Naive thymus-derived CD4-positive, alpha-beta T cell (primary cell): ENCODE measurements at regions of chr5 and their contacts with region 1.

Region 1: DNA sequence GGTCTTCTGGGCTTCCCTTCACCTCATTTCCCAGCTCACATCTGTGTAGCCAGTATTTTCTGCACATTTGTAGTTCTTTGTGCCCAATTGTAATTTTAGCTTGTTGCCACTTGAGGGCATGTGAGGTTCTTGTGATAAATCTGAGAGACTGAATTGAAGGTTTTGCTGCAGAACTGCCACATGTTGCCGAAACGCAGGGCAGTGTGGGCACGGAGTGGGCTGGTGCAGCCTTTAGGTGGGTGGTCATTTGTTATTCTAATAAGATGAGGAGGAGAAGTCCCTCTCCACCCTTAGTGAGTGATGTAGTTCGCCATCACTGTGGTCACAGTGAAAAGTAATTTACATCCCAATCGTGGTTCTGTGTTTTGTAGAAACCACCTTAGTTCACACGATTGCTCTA is 21.2 kb downstream of the OTULIN start:
- DNase-seq: peak in 8 of 9 donors; percentile 41 to 70 (median 62)
- ATAC-seq: peak; percentile 87
- H3K4me3 ChIP-seq: peak overlapping the region; percentile 26
- H3K4me3 Mint-ChIP-seq: peak overlapping the region; percentile 49 to 85 (median 72)
- H3K27ac ChIP-seq: no peak overlapping the region
- H3K27ac Mint-ChIP-seq: peak overlapping the region; percentile 41 to 97 (median 77)
- H3K4me1 ChIP-seq: peaks cover 4% of the 10 kb centered on the region in 2 donors
- H3K4me1 Mint-ChIP-seq: peaks cover 4 to 20% (median 14%) of the 10 kb centered on the region in 7 donors
- H3K27me3 ChIP-seq: no peaks in the 10 kb centered on the region
- H3K27me3 Mint-ChIP-seq: no peaks in the 10 kb centered on the region

Region 2: DNA sequence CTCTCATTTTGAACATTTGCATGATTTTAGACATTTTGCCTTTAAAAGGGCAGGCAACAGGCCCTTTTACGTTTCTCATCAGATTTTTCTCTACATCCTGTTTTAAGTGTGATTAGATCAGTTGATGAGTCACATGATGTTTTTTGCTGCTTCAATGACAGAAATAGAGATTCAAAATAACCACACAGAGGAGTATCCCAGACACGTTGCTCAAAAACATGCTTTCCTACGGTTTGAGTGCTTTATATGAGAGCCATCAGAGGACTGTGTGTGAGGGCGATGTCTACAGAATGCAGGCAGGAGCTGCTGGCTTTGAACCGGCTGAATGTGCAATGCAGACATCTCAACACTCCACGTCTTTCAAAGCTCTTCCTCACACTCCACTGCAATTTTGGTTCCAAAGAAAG is 20.9 kb after region 1 on chr5:
- CTCF ChIA-PET with region 1: interaction called, 45 read pairs
- POLR2A ChIA-PET with region 1: interaction called, 17 read pairs
- intact Hi-C with region 1: loop called (anchors 1 kb)
- DNase-seq: peak in 8 of 9 donors; percentile 33 to 88 (median 84)
- ATAC-seq: peak; percentile 96
- H3K4me3 ChIP-seq: peak overlapping the region; percentile 4
- H3K4me3 Mint-ChIP-seq: peak overlapping the region; percentile 74 to 94 (median 86)
- H3K27ac ChIP-seq: peak overlapping the region; percentile 72
- H3K27ac Mint-ChIP-seq: peak overlapping the region; percentile 96 to 100 (median 99)
- H3K4me1 ChIP-seq: peaks cover 34 to 75% of the 10 kb centered on the region in 2 donors
- H3K4me1 Mint-ChIP-seq: peaks cover 50 to 96% (median 86%) of the 10 kb centered on the region in 7 donors
- H3K27me3 ChIP-seq: no peaks in the 10 kb centered on the region
- H3K27me3 Mint-ChIP-seq: no peaks in the 10 kb centered on the region

Region 3: GRCh38 chr5:14727428-14727865 is 41.7 kb after region 1 on chr5:
- CTCF ChIA-PET with region 1: interaction called, 49 read pairs
- POLR2A ChIA-PET with region 1: interaction called, 6 read pairs
- intact Hi-C with region 1: loop called (anchors 1 kb)
- DNase-seq: peak; percentile 47 to 79 (median 69)
- ATAC-seq: peak; percentile 77
- H3K4me3 ChIP-seq: no peak overlapping the region
- H3K4me3 Mint-ChIP-seq: no peak overlapping the region
- H3K27ac ChIP-seq: no peak overlapping the region
- H3K27ac Mint-ChIP-seq: peak overlapping the region in 5 of 9 donors; percentile 5 to 49 (median 42)
- H3K4me1 ChIP-seq: peaks cover 0 to 4% of the 10 kb centered on the region in 2 donors
- H3K4me1 Mint-ChIP-seq: peaks cover 8 to 22% (median 16%) of the 10 kb centered on the region in 7 donors
- H3K27me3 ChIP-seq: no peaks in the 10 kb centered on the region
- H3K27me3 Mint-ChIP-seq: no peaks in the 10 kb centered on the region

Region 4: GRCh38 chr5:14895301-14895700 is 209.5 kb after region 1 on chr5:
- CTCF ChIA-PET with region 1: no interaction called
- POLR2A ChIA-PET with region 1: no interaction called
- intact Hi-C with region 1: loop called in 1 of 2 experiments (anchors 1 kb)
- DNase-seq: peak in 1 of 9 donors; percentile 19
- ATAC-seq: no peak
- H3K4me3 ChIP-seq: no peak overlapping the region
- H3K4me3 Mint-ChIP-seq: no peak overlapping the region
- H3K27ac ChIP-seq: no peak overlapping the region
- H3K27ac Mint-ChIP-seq: no peak overlapping the region
- H3K4me1 ChIP-seq: no peaks in the 10 kb centered on the region
- H3K4me1 Mint-ChIP-seq: no peaks in the 10 kb centered on the region
- H3K27me3 ChIP-seq: no peaks in the 10 kb centered on the region
- H3K27me3 Mint-ChIP-seq: no peaks in the 10 kb centered on the region

Region 5: DNA sequence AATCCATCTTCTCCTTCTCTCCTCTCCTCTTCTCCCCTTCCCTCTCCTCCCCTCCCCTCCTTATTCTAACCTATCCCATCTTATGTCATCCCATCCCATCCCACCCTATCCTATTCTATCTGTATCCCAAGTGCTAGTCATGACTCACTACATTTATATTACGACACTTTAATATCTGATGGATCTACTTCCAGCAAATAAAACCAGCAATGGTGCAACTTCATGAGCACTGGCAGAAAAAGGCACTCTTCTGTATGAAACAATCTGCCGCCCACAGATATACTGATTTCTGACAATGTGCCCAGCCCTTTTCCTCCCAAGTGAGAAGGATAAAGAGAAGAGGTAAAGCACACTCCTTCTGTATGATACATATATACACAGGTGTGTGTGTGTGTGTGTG is 272.4 kb after region 1 on chr5:
- CTCF ChIA-PET with region 1: no interaction called
- POLR2A ChIA-PET with region 1: no interaction called
- intact Hi-C with region 1: loop called in 1 of 2 experiments (anchors 1 kb)
- DNase-seq: no peak
- ATAC-seq: no peak
- H3K4me3 ChIP-seq: no peak overlapping the region
- H3K4me3 Mint-ChIP-seq: no peak overlapping the region
- H3K27ac ChIP-seq: no peak overlapping the region
- H3K27ac Mint-ChIP-seq: no peak overlapping the region
- H3K4me1 ChIP-seq: no peaks in the 10 kb centered on the region
- H3K4me1 Mint-ChIP-seq: peaks cover 0 to 5% (median 0%) of the 10 kb centered on the region in 7 donors
- H3K27me3 ChIP-seq: no peaks in the 10 kb centered on the region
- H3K27me3 Mint-ChIP-seq: peaks cover 0 to 10% (median 0%) of the 10 kb centered on the region in 5 donors

Region 6: DNA sequence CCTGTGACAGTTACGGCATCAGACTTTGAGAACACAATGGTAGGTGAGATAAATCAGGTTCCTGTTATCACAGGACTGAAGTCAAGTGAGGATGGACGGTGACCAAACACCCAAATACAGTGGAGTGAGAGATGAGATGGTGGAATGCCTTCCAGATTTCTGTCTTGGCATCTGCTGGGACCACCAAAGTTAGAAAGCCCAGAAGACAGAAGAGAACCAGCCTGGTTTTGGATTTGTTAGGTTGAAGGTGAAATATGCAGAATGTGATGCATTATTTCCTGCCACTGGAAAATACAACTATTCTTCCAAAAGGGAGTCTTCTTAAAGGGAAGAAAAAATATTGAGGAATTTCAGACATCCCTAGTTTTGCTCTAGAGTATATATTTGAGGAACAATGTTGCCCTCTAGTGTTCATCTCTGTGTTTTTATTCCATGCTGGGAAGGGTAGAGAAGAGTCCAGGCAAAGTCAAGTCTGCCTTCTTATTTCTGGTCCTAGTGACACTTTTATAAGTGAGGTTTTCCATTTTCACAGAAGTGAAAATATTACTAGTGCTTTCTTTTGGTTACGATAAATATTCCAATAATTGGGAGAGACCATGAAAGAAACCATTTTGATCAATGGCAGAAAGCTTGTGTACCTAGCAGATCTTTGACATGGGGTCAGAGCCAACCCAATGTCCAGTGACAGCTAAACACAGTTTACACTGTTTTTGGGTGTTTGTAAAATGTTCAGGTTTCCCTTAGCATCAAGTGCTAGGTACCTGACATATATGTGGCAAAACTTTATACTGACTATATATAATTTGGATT is 328.1 kb after region 1 on chr5:
- CTCF ChIA-PET with region 1: interaction called, 9 read pairs
- POLR2A ChIA-PET with region 1: no interaction called
- intact Hi-C with region 1: loop called (anchors 1 kb)
- DNase-seq: peak in 5 of 9 donors; percentile 15 to 41 (median 31)
- ATAC-seq: peak; percentile 73
- H3K4me3 ChIP-seq: no peak overlapping the region
- H3K4me3 Mint-ChIP-seq: no peak overlapping the region
- H3K27ac ChIP-seq: no peak overlapping the region
- H3K27ac Mint-ChIP-seq: no peak overlapping the region
- H3K4me1 ChIP-seq: no peaks in the 10 kb centered on the region
- H3K4me1 Mint-ChIP-seq: no peaks in the 10 kb centered on the region
- H3K27me3 ChIP-seq: no peaks in the 10 kb centered on the region
- H3K27me3 Mint-ChIP-seq: peaks cover 0 to 7% (median 0%) of the 10 kb centered on the region in 5 donors